Body of pancreas (tissue), 4 donors: ENCODE measurements at regions of chr9 and their contacts with region 1.

Region 1: GRCh38 chr9:122810306-122810946 is 10.5 kb downstream of the OR1K1 start:
- DNase-seq: peak; percentile 73 to 81 (median 79)
- ATAC-seq: peak; percentile 87
- H3K4me3 ChIP-seq: no peak overlapping the region
- H3K27ac ChIP-seq: peak overlapping the region in 3 of 4 donors; percentile 38 to 54 (median 52)
- H3K4me1 ChIP-seq: peaks cover 17% of the 10 kb centered on the region
- H3K27me3 ChIP-seq: no peaks in the 10 kb centered on the region
- CTCF ChIP-seq: peak; percentile 50 to 90 (median 85)
- POLR2A ChIP-seq: no peak

Region 2: DNA sequence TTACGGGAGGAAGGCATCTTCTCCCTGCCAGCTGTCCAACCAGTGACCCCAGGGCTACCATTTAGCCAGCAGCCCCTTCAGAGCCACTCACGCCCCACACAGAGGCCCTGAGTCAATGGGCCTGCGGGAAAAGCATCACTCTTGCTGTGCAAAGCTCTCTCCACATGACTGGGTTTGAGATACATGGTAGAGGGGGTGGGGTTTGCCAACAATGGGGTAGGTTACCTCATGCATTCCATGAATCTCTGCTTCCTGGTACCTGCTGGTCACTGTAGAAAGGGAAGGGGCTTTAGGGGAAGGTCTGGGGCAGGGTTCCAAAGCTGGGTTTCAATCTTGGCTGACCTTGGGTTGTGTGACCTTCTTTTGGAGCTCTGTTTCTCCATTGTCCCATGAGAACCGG is 694.4 kb before region 1 on chr9:
- intact Hi-C with region 1: loop called (anchors 10 kb)
- DNase-seq: no peak
- ATAC-seq: no peak
- H3K4me3 ChIP-seq: no peak overlapping the region
- H3K27ac ChIP-seq: no peak overlapping the region
- H3K4me1 ChIP-seq: no peaks in the 10 kb centered on the region
- H3K27me3 ChIP-seq: no peaks in the 10 kb centered on the region
- CTCF ChIP-seq: no peak
- POLR2A ChIP-seq: no peak

Region 3: GRCh38 chr9:122350638-122351355 is 459.6 kb before region 1 on chr9:
- intact Hi-C with region 1: loop called (anchors 10 kb)
- DNase-seq: peak; percentile 78 to 83 (median 79)
- ATAC-seq: peak; percentile 80
- H3K4me3 ChIP-seq: no peak overlapping the region
- H3K27ac ChIP-seq: no peak overlapping the region
- H3K4me1 ChIP-seq: peaks cover 15% of the 10 kb centered on the region
- H3K27me3 ChIP-seq: peaks cover 0 to 5% of the 10 kb centered on the region in 2 donors
- CTCF ChIP-seq: peak; percentile 86 to 97 (median 95)
- POLR2A ChIP-seq: no peak

Region 4: DNA sequence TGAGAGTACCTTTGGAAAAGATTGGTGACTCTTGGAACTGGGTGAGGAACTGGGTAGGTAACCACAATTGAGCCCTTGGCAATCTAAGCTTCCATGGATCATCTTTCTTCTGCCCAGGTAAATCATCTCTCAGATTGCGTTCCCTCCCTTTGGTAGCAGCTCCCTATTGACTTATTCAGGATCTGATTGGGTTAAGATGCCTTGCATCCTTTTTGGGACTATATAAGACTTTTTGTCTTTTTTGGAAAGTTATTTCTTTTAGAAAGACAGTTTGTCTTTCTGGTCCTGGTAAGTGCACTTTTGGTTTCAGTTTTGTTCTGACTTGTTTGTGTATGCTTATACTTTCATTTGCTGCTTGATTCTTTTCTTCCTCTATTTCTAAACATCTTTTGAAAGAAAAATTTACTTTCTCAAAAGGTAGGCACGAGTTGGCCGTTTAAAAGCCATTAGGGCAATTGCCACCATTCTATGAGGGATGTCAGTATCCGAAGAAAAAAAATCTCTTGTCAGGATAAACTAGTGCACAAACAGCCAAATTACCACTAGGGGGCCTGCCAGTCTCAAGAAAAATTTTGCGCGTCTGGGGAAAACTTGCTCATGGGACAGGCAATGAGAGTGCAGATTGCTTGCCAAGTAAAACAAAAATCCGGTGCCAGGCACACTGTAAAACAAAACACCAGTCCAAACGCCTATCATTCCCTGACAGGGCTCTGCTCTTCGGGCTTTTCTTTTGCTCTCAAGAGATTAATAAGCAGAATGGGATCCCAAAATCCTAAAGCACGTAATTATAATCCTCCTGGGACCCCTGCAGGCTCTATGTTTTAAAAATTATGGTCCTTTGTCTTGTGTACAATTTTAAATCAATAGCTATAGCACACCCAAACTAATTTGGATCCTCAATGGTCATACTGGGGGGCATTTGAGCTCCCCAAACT is 345.5 kb before region 1 on chr9:
- intact Hi-C with region 1: loop called (anchors 5 kb)
- DNase-seq: peak; percentile 84 to 91 (median 88)
- ATAC-seq: peak; percentile 93
- H3K4me3 ChIP-seq: peak overlapping the region in 1 of 2 donors; percentile 10
- H3K27ac ChIP-seq: peak overlapping the region in 1 of 4 donors; percentile 14
- H3K4me1 ChIP-seq: peaks cover 5% of the 10 kb centered on the region
- H3K27me3 ChIP-seq: no peaks in the 10 kb centered on the region
- CTCF ChIP-seq: peak; percentile 60 to 94 (median 87)
- POLR2A ChIP-seq: no peak

Region 5: DNA sequence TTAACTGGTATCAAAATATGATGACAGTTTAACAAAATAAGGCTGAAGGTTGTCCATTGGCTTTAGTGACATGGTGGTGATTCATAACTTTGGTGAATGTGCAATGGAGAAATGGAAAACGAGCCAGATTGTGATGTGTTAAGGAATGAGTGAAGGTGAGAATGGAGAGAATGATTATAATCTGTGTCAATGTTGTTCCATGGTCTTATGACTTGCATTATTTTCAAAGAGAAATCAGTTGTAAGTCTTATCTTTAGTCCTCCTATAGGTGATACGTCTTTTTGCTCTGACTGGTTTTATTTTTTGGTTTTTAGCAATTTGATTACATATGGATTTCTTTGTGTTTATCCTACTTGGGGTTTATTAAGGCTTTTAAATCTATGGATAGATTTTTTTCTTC is 55.6 kb before region 1 on chr9:
- intact Hi-C with region 1: no loop called
- DNase-seq: no peak
- ATAC-seq: no peak
- H3K4me3 ChIP-seq: no peak overlapping the region
- H3K27ac ChIP-seq: no peak overlapping the region
- H3K4me1 ChIP-seq: no peaks in the 10 kb centered on the region
- H3K27me3 ChIP-seq: no peaks in the 10 kb centered on the region
- CTCF ChIP-seq: no peak
- POLR2A ChIP-seq: no peak

Region 6: DNA sequence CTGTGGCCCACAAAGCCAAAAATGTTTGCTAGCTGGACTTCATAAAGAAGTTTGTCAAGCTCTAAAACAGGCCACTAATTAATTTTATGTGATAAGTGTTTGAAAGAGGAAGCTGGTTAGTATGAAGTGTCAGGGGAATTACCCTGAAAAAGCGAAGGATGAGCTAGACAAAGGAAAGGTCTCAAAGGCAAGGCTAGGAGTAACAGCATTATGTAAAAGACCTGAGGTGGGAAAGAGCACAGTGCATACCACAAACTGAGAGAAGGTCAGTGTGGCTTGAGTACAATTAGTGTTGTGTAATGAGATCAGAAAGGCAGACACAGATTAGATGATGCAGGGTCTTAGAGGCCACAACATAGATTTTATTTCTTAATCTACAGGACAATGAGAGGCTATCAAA is 65.1 kb after region 1 on chr9:
- intact Hi-C with region 1: no loop called
- DNase-seq: no peak
- ATAC-seq: no peak
- H3K4me3 ChIP-seq: no peak overlapping the region
- H3K27ac ChIP-seq: no peak overlapping the region
- H3K4me1 ChIP-seq: no peaks in the 10 kb centered on the region
- H3K27me3 ChIP-seq: no peaks in the 10 kb centered on the region
- CTCF ChIP-seq: no peak
- POLR2A ChIP-seq: no peak

Region 7: DNA sequence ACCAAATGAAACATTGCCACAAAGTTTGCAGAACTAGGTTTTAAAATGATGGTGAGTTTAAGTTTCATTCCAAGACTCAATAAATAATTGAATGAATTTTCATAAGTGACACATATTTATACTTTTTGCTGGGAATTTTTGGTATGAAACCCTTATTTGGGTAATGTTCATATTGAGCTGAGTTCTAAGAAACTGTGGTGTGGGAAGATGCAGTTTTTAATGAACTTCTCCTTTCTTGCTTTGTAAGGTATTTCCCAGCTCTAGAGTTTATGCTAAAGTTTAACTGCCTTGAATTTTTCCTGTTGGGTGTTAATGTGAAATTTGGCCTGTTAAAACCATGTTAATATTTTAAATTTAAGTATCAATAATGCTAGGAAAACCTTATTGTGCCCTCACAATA is 145.5 kb after region 1 on chr9:
- intact Hi-C with region 1: no loop called
- DNase-seq: no peak
- ATAC-seq: no peak
- H3K4me3 ChIP-seq: no peak overlapping the region
- H3K27ac ChIP-seq: no peak overlapping the region
- H3K4me1 ChIP-seq: peaks cover 35% of the 10 kb centered on the region
- H3K27me3 ChIP-seq: no peaks in the 10 kb centered on the region
- CTCF ChIP-seq: no peak
- POLR2A ChIP-seq: no peak